CD8-positive, alpha-beta T cell (primary cell): ENCODE measurements at regions of chr11 and their contacts with region 1.

Region 1: GRCh38 chr11:33996498-33997454 is 54.8 kb upstream of the CAPRIN1 start:
- DNase-seq: peak; percentile 50 to 84 (median 75)
- ATAC-seq: peak; percentile 100
- H3K4me3 ChIP-seq: no peak overlapping the region
- H3K4me3 Mint-ChIP-seq: peak overlapping the region; percentile 59
- H3K27ac ChIP-seq: no peak overlapping the region
- H3K27ac Mint-ChIP-seq: no peak overlapping the region
- H3K4me1 ChIP-seq: peaks cover 7% of the 10 kb centered on the region
- H3K4me1 Mint-ChIP-seq: peaks cover 13% of the 10 kb centered on the region
- H3K27me3 ChIP-seq: peaks cover 0 to 2% of the 10 kb centered on the region in 2 experiments
- H3K27me3 Mint-ChIP-seq: peaks cover 18% of the 10 kb centered on the region
- CTCF ChIP-seq: peak; percentile 75

Region 2: DNA sequence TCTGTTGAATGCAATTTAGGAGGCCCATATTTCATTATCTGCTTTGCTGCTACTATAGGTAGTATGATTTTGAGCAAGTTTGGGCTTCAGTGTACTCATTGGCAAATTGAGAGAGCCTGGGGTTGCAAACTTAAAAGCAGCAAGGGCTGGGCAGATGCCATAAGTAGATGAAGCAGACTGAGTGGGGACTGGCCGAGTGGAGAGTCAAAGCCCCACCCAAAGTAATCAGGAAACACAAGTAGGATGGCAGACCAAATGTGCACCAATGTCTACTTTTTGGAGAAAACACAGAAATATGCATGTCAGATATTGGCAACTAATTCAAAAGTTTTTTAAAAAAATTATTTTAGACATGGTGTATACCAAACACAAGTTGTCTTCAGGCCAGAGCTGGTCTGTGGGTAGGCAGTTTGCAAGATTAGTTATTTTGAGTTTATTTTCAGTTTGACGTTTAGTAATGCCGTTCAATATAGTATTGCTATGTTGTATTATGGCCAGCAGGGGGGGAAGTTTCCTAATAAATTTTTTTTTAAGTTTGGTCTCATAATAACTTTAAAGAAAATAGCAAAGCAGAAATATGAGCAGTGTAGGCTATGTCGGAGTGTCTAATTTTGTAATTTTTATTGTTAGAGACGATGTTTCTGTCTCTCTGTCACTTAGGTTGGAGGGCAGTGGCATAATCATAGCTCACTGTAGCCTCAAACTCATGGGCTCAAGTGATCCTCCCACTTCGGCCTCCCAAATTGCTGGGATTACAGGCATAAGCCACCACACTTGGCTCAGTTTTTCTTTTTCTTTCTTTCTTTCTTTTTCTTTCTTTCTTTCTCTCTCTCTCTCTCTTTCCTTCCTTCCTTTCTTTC is 634.5 kb before region 1 on chr11:
- CTCF ChIA-PET with region 1: no interaction called
- POLR2A ChIA-PET with region 1: no interaction called
- intact Hi-C with region 1: loop called in 1 of 2 experiments (anchors 10 kb)
- DNase-seq: peak in 3 of 9 experiments; percentile 16 to 65 (median 56)
- ATAC-seq: peak; percentile 54
- H3K4me3 ChIP-seq: no peak overlapping the region
- H3K4me3 Mint-ChIP-seq: no peak overlapping the region
- H3K27ac ChIP-seq: no peak overlapping the region
- H3K27ac Mint-ChIP-seq: no peak overlapping the region
- H3K4me1 ChIP-seq: no peaks in the 10 kb centered on the region
- H3K4me1 Mint-ChIP-seq: peaks cover 2% of the 10 kb centered on the region
- H3K27me3 ChIP-seq: no peaks in the 10 kb centered on the region
- H3K27me3 Mint-ChIP-seq: peaks cover 10% of the 10 kb centered on the region
- CTCF ChIP-seq: peak; percentile 76

Region 3: DNA sequence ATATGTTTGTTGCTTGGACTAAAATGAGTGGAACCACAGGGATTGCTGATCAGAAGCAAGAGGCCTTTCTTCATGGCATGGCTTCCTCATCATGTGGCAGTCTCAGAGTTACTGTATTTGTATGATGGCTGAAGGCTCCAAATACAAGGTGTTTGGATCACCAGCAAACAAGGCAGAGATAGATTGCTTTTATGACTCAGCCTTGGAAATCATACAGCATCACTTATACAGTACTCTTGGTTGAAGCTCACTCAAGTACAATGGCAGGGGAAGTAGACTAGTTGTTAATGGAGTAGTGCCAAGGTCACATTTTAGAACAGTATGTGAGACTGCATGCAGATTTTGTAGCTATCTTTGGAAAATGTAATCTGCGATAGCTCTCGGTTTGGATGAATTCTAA is 71.3 kb after region 1 on chr11:
- CTCF ChIA-PET with region 1: interaction called, 5 read pairs
- POLR2A ChIA-PET with region 1: interaction called, 3 read pairs
- intact Hi-C with region 1: loop called in 1 of 2 experiments (anchors 5 kb)
- DNase-seq: no peak
- ATAC-seq: no peak
- H3K4me3 ChIP-seq: no peak overlapping the region
- H3K4me3 Mint-ChIP-seq: no peak overlapping the region
- H3K27ac ChIP-seq: no peak overlapping the region
- H3K27ac Mint-ChIP-seq: peak overlapping the region; percentile 32
- H3K4me1 ChIP-seq: peaks cover 41% of the 10 kb centered on the region
- H3K4me1 Mint-ChIP-seq: peaks cover 76% of the 10 kb centered on the region
- H3K27me3 ChIP-seq: no peaks in the 10 kb centered on the region
- H3K27me3 Mint-ChIP-seq: no peaks in the 10 kb centered on the region
- CTCF ChIP-seq: no peak

Region 4: GRCh38 chr11:34364102-34364501 is 367.3 kb after region 1 on chr11:
- CTCF ChIA-PET with region 1: interaction called, 18 read pairs
- POLR2A ChIA-PET with region 1: no interaction called
- intact Hi-C with region 1: loop called in 1 of 2 experiments (anchors 1 kb)
- DNase-seq: peak in 1 of 9 experiments; percentile 14
- ATAC-seq: no peak
- H3K4me3 ChIP-seq: no peak overlapping the region
- H3K4me3 Mint-ChIP-seq: no peak overlapping the region
- H3K27ac ChIP-seq: no peak overlapping the region
- H3K27ac Mint-ChIP-seq: no peak overlapping the region
- H3K4me1 ChIP-seq: no peaks in the 10 kb centered on the region
- H3K4me1 Mint-ChIP-seq: peaks cover 7% of the 10 kb centered on the region
- H3K27me3 ChIP-seq: peaks cover 0 to 5% of the 10 kb centered on the region in 2 experiments
- H3K27me3 Mint-ChIP-seq: peaks cover 21% of the 10 kb centered on the region
- CTCF ChIP-seq: no peak

Region 5: GRCh38 chr11:34492806-34493414 is 496.1 kb after region 1 on chr11:
- CTCF ChIA-PET with region 1: interaction called, 5 read pairs
- POLR2A ChIA-PET with region 1: no interaction called
- intact Hi-C with region 1: loop called in 1 of 2 experiments (anchors 1 kb)
- DNase-seq: peak in 5 of 9 experiments; percentile 26 to 55 (median 42)
- ATAC-seq: no peak
- H3K4me3 ChIP-seq: no peak overlapping the region
- H3K4me3 Mint-ChIP-seq: no peak overlapping the region
- H3K27ac ChIP-seq: no peak overlapping the region
- H3K27ac Mint-ChIP-seq: no peak overlapping the region
- H3K4me1 ChIP-seq: no peaks in the 10 kb centered on the region
- H3K4me1 Mint-ChIP-seq: no peaks in the 10 kb centered on the region
- H3K27me3 ChIP-seq: no peaks in the 10 kb centered on the region
- H3K27me3 Mint-ChIP-seq: peaks cover 2% of the 10 kb centered on the region
- CTCF ChIP-seq: peak; percentile 42